ENCODE measurements at regions of chr10 and their contacts with region 1.

Region 1: GRCh38 chr10:13299437-13300287 is at the start of gene PHYH:
- DNase-seq: peak; percentile 94 to 98
- ATAC-seq: peak; percentile 87 to 90
- H3K4me3 ChIP-seq: peak within 1 kb of the TSS; percentile 63 to 96 (median 77)
- H3K27ac ChIP-seq: peak within 1 kb of the TSS; percentile 96 to 100 (median 100)
- H3K4me1 ChIP-seq: peaks cover 17 to 21% of the 10 kb centered on the region in 2 donors
- H3K27me3 ChIP-seq: no peaks in the 10 kb centered on the region
- CTCF ChIP-seq: peak in 1 of 5 experiments; percentile 26
- POLR2A ChIP-seq: peak; percentile 90 to 95
- total RNA-seq, gene PHYH: 107 to 147 (median 143) TPM

Region 2: DNA sequence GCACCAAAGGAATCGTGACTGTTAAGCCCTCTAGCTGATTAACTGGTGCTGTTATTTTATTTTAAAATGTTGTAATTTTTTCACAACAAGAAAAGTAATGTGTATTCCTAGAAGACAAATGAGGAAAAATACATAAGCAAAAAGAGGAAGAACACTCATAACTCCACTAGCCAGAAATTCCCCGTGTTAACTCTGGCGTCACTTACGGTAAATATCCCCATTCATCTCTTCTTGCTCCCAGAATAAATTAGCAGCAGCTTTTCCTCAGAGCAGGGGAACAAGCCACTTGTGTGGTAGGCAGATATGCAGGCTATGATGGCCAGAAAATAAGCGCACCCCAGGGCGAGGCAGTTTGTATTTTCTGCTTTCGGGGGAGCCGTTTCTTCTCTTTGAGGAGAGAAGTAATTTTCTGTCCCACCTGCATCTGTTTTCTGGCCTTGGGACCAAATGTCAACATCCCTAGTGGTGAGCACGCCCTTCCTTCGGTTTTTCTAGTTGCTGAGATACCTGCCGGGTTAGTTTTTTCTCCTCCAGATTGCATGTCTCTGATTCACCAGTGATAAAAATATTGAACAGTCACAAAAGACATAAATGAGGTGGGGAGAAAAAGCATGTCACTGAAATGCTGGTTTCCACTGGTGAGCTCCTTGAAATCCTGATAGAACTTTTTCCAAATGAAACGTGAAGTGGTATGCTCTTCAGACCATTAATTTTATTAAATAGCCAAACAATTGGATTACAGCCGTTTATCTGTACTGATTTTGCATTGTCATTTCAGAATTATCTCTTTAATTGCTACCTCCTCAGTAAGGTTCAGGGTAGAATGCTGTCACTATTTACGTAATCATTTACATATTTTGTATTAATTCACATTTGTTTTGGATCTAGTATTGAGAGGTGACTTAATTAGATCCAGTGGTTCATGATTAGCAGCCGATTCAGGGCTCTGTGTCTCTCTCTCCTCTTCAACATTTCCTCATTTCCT is 682.2 kb before region 1 on chr10:
- in situ Hi-C with region 1: no loop called
- intact Hi-C with region 1: no loop called
- DNase-seq: no peak
- ATAC-seq: no peak
- H3K4me3 ChIP-seq: no peak overlapping the region
- H3K27ac ChIP-seq: no peak overlapping the region
- H3K4me1 ChIP-seq: no peaks in the 10 kb centered on the region
- H3K27me3 ChIP-seq: no peaks in the 10 kb centered on the region
- CTCF ChIP-seq: no peak
- POLR2A ChIP-seq: no peak

Region 3: DNA sequence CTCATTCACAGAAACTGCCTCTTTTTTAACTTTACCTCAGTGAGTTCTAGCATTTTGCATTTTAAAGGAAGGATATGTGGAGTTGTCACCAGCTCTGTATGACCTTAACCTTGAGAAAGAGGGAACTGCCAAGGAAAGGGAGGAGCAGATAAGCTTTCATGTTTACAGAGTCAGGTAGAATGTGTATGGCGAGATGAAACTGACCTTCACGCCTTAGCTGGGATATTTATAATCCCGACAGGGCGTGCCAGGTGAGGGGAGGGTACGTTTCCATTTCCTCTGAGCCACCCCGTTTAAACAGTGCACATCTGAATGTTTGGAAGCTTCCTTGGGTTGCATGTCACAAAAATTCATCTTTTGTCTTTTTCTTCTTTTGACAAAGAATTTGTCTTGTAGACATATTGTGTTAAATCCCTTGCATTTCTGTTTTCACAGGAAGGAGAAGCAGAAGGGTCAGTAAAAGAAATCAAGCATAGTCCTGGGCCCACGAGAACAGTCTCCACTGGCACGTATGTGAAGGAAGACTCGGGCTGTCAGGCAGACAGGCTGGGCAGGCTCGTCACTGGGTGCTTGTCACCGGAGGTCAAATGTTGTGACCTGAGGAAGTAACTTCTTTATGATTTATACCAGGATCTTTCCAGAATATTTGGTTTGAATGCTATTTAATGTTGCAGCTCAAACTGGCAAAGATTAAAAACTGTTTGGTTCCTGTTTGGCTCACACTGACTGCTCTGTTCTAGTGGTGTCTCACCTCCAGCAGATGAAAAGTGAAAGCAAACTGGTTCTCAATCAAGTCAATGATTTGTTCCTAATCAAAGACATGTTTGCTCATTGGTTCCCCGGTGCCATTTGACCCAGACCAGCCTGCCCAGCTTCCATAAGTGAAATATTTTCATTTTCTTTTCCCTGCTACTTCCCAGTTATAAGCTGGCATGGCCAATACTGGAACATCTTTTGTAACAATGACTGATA is 183.5 kb before region 1 on chr10:
- in situ Hi-C with region 1: no loop called
- intact Hi-C with region 1: loop called (anchors 5 kb)
- DNase-seq: peak; percentile 57 to 73
- ATAC-seq: peak; percentile 63 to 67
- H3K4me3 ChIP-seq: peak overlapping the region in 2 of 4 donors; percentile 19 to 20
- H3K27ac ChIP-seq: peak overlapping the region; percentile 86 to 97 (median 92)
- H3K4me1 ChIP-seq: peaks cover 48 to 58% of the 10 kb centered on the region in 2 donors
- H3K27me3 ChIP-seq: no peaks in the 10 kb centered on the region
- CTCF ChIP-seq: no peak
- POLR2A ChIP-seq: peak in 1 of 2 donors; percentile 49

Region 4: DNA sequence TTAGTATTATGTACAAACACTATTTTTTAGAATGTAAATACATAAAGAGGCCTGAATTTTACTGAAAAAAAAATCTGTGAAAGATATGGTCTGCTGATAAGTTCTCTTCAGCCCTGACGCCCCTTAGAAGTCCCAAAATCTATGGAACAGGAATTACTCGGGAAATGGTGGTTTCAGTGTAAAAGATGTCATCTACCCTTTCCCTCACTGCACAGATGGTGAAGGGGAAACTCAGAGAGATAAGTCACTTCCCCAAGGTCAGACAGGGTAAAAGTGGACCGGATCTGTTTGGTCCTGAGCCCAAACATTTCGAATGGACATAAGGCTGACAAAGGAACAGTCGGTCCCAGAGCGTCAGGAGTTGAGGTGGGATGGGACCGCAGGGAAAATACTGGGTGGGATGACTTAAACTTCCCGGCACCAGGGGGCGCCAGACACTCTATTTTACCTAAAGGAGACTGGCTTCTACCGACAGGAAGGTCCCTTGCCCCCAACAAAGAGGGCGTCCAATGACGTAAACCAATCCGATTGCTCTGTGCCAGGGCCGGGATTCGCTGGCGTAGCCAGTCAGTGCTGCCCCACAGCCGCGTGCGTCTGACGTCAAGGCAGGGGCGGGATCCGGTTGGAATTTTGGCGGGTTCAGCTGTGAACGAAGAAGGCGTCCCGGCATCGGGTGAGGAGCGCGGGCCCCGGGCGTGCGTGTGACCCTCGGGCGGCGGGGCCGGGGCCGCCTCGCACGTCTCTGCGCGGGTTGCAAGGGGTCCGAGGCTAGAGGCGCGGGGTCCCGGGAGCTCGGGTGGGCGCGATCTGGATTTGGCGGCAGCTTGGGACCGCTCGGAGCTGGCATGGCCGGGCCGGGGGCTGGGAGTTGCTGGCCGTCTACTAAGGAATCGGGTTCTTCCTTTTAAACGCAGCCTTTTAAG is 138.5 kb before region 1 on chr10 and contains the start of gene MCM10:
- in situ Hi-C with region 1: loop called (anchors 5 to 10 kb)
- intact Hi-C with region 1: loop called (anchors 1 kb)
- DNase-seq: peak; percentile 97 to 98
- ATAC-seq: peak; percentile 99
- H3K4me3 ChIP-seq: peak within 1 kb of the TSS; percentile 48 to 58 (median 51)
- H3K27ac ChIP-seq: peak within 1 kb of the TSS in 1 of 4 donors; percentile 32
- H3K4me1 ChIP-seq: peaks cover 4 to 9% of the 10 kb centered on the region in 2 donors
- H3K27me3 ChIP-seq: no peaks in the 10 kb centered on the region
- CTCF ChIP-seq: peak; percentile 82 to 94 (median 92)
- POLR2A ChIP-seq: no peak
- total RNA-seq, gene MCM10: 0.64 to 1.5 (median 0.78) TPM

Region 5: GRCh38 chr10:13206546-13207443 is 92.9 kb before region 1 on chr10:
- in situ Hi-C with region 1: no loop called
- intact Hi-C with region 1: loop called (anchors 2 kb)
- DNase-seq: no peak
- ATAC-seq: no peak
- H3K4me3 ChIP-seq: no peak overlapping the region
- H3K27ac ChIP-seq: no peak overlapping the region
- H3K4me1 ChIP-seq: no peaks in the 10 kb centered on the region
- H3K27me3 ChIP-seq: no peaks in the 10 kb centered on the region
- CTCF ChIP-seq: peak in 3 of 5 experiments; percentile 22 to 55 (median 37)
- POLR2A ChIP-seq: no peak

Region 6: DNA sequence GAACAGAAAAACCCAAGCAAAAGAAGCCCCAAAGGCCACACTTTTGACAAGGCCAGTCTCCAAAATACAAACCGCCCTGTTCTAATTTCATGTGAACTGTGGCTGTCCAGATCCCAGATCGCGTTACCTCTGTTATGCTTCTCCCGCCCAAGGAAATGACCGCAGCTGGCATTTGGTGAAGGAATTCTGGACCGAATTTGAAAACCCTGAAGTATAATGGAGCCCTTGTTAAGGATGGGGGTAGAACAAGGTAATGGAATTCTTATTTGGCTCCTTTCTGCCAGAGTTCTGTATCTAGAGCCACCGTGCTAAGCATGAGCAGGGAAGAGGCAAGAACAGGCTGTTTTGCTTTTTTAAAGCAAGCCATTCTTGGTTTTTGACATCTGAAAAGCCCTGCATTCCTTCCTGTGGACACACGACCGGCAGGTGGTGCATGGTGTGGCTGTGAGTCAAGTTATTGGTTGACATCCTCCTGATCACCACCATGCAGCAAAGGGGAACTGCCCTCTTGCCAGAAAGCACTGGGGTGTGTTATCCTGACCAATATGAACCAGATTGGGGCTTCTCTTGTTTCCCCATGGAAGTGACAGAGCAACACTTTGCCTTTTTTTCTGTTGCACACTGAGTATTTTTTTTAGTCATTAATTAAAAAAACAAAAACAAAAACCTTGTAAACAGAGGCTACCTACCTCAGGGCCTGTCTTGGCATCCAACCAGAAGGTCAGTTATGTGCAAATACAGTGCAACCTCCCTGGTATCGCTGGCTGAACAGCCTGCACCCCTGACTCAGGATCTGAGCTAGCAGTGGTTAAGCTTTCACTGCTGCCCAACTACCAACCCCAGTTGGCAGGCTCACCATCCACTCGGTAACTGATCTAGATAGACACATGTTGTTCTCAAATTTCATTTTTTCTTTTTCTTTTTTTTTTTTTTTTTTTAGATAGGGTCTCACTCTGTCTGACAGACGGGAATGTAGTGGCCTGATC is 79.7 kb before region 1 on chr10:
- in situ Hi-C with region 1: no loop called
- intact Hi-C with region 1: loop called (anchors 5 kb)
- DNase-seq: peak; percentile 74
- ATAC-seq: peak; percentile 94
- H3K4me3 ChIP-seq: peak overlapping the region in 3 of 4 donors; percentile 4 to 9 (median 4)
- H3K27ac ChIP-seq: peak overlapping the region; percentile 65 to 84 (median 78)
- H3K4me1 ChIP-seq: peaks cover 20 to 23% of the 10 kb centered on the region in 2 donors
- H3K27me3 ChIP-seq: no peaks in the 10 kb centered on the region
- CTCF ChIP-seq: peak in 2 of 5 experiments; percentile 11 to 20
- POLR2A ChIP-seq: no peak

Region 7: DNA sequence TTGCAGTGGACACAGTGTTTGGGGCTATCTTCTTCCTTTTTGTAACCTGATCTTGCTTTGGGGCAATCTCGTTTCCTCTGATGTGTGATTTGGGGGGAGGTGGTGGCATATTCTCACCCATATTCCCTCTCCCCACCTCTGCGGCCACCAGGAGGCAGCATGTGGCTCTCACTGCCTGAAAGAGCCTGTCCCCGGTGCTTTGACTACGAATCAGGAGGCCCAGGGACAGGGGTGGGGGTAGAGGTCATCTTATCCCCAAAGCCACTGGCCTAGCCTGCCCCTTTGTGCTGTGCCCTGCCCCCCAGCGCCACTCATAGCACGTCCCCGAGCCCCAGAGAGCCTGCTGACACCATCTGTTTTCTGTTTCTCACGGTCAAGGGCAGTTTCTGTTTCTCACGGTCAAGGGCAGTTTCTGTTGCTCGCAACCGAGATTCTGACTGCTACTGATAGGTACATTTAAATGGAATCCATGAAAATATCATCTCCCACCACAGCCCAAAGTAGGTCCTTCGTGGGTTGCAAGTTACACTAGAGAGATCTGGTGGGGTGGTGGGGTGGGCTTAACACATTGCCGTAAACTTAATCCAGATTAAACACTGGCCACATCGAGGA is 28.0 kb before region 1 on chr10:
- in situ Hi-C with region 1: no loop called
- intact Hi-C with region 1: loop called (anchors 1 kb)
- DNase-seq: peak; percentile 5 to 45
- ATAC-seq: peak; percentile 25 to 52
- H3K4me3 ChIP-seq: peak overlapping the region in 3 of 4 donors; percentile 18 to 30 (median 20)
- H3K27ac ChIP-seq: peak overlapping the region; percentile 57 to 73 (median 66)
- H3K4me1 ChIP-seq: peaks cover 16% of the 10 kb centered on the region in 2 donors
- H3K27me3 ChIP-seq: no peaks in the 10 kb centered on the region
- CTCF ChIP-seq: peak in 3 of 5 experiments; percentile 26 to 52 (median 41)
- POLR2A ChIP-seq: no peak

Region 8: DNA sequence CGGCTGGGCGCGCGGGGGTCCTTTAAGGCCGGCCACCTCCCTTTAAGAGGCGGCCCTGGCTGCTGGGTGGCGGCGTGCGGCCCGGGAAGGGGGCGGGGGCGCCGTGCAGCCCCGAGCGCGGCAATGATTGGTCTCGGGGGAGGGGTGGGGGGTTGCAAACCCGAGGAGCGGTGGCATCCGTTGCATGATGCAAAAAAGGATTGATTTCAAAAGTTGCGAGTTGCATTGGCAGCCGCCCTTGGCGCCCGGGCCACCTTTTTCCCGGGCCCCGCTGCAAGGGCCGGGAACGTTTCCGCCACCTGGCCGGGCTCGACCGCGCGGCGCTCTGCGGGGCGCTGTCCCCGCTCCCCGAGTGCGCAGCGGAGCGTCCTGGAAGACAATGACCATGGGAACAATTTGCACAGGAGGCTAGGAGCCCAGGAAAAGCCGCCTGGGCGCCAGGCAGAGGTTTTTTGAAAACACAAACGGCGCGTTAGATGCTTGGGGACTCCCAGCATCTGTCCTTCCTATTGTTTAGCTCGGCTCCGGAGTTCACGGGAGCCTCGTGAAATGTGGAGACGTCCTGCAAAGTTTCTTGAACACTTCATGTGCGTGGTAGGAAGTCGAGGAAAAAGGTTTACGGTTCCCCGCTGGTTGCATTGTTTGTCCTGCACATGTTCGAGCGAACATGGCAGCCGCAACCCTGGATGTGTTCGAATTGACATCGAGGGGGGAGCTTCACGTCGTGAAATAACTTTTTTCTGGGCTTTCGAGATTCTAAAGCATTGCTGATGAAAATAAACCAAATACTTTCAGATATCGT is 48.8 kb after region 1 on chr10 and contains the start of gene SEPHS1:
- in situ Hi-C with region 1: no loop called
- intact Hi-C with region 1: loop called (anchors 1 kb)
- DNase-seq: peak; percentile 76 to 88
- ATAC-seq: peak; percentile 81 to 83
- H3K4me3 ChIP-seq: peak within 1 kb of the TSS; percentile 72 to 88 (median 83)
- H3K27ac ChIP-seq: peak within 1 kb of the TSS; percentile 85 to 97 (median 94)
- H3K4me1 ChIP-seq: peaks cover 24 to 25% of the 10 kb centered on the region in 2 donors
- H3K27me3 ChIP-seq: peaks cover 0 to 13% (median 10%) of the 10 kb centered on the region in 3 donors
- CTCF ChIP-seq: peak in 1 of 5 experiments; percentile 31
- POLR2A ChIP-seq: no peak
- total RNA-seq, gene SEPHS1: 22.4 to 29.7 (median 27.9) TPM

Measured in gastrocnemius medialis (tissue), 4 donors.